Activated CD4-positive, alpha-beta memory T cell treated with anti-CD3 and anti-CD28 coated beads for 36 hours (primary cell): ENCODE measurements at regions of chr18 and their contacts with region 1.

Region 1: DNA sequence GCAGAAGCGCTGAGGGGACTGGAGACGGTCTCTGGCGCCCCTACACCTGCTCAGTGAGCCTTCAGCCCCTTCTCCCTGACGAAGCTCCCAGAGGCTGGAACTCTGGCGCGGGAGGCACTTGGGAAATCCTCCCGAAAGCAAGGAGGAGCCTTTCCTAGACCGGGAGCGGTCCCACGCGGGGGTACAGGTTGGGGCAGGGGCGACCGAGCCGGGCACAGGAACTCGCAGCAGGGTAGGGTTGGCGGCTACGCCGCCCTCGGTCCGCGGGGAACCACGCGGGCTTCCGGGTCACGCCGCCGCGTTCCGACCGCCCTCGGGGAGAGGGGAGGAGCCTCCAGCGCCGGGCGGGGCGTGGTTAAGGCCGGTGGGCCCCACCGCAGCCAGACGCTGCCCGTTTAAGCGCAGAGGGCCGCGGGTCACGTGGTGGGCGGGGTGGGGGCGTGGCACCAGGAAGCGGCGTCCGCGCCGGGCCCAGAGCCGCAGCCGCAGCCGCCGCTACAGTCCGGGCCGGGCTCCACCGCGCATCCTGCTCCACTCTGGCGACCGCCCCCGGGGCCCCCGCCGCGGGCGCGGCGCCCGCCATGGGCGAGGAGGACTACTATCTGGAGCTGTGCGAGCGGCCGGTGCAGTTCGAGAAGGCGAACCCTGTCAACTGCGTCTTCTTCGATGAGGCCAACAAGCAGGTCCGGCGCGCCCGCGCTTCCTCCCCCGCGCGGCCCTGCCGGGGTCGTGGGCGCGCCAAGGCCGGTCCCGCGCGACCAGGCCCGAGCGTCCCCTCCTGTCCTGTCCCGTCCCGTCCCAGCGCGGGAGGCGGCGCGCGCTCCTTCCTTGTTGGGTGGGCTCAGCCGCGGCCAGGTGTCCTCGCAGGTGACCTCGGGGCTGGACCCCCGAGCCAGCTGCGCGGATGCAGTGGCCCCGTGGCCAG is at the start of gene RMC1:
- DNase-seq: peak; percentile 98
- H3K4me3 Mint-ChIP-seq: peak within 1 kb of the TSS; percentile 91
- H3K27ac Mint-ChIP-seq: peak within 1 kb of the TSS; percentile 87
- H3K4me1 Mint-ChIP-seq: peaks cover 32% of the 10 kb centered on the region
- H3K27me3 Mint-ChIP-seq: no peaks in the 10 kb centered on the region
- total RNA-seq, gene RMC1: 47.6 to 48.6 TPM

Region 2: DNA sequence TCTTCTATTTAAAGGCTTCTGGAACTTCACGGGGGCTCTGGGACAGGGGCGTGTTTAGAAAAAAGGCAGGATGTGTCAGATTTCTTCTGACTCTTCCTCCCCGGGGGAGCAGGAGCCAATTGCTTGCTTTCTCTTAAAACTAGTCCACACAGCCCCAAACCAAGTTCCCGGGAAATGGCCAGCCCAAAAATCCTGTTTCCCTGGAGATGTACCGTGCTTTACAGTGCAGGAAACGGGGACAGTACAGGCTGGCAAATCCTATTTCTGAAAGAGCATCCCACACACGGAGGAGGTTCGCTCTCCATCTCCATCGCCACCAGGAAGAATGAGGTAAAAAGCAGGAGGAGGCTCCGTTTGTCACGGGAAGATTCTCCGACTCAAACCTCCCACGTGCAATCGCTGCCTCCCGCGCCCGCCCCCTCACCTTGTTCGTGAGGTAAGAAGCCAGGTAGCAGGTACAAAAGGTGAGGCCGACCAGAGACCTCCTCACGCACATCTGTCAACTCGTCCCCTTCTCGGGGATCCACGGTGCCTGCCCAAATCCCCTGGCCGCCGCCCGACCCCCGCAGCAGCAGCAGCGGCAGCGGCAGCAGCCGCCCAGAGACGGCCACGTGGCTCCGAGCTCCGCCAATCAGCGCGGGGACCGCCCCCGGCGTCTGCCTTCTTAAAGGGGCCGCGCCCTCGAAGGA is 65.8 kb before region 1 on chr18:
- CTCF ChIA-PET with region 1: interaction called, 3 read pairs
- POLR2A ChIA-PET with region 1: no interaction called
- intact Hi-C with region 1: loop called (anchors 1 kb)
- DNase-seq: peak; percentile 87
- H3K4me3 Mint-ChIP-seq: peak overlapping the region; percentile 90
- H3K27ac Mint-ChIP-seq: peak overlapping the region; percentile 18
- H3K4me1 Mint-ChIP-seq: peaks cover 17% of the 10 kb centered on the region
- H3K27me3 Mint-ChIP-seq: peaks cover 2% of the 10 kb centered on the region

Region 3: GRCh38 chr18:23487738-23488570 is 15.3 kb before region 1 on chr18:
- CTCF ChIA-PET with region 1: interaction called, 35 read pairs
- POLR2A ChIA-PET with region 1: no interaction called
- intact Hi-C with region 1: loop called (anchors 1 kb)
- DNase-seq: peak; percentile 71
- H3K4me3 Mint-ChIP-seq: peak overlapping the region; percentile 58
- H3K27ac Mint-ChIP-seq: peak overlapping the region; percentile 76
- H3K4me1 Mint-ChIP-seq: peaks cover 12% of the 10 kb centered on the region
- H3K27me3 Mint-ChIP-seq: no peaks in the 10 kb centered on the region

Region 4: GRCh38 chr18:23573626-23574431 is 70.5 kb after region 1 on chr18:
- CTCF ChIA-PET with region 1: no interaction called
- POLR2A ChIA-PET with region 1: no interaction called
- intact Hi-C with region 1: loop called (anchors 2 kb)
- DNase-seq: peak; percentile 73
- H3K4me3 Mint-ChIP-seq: peak overlapping the region; percentile 43
- H3K27ac Mint-ChIP-seq: peak overlapping the region; percentile 88
- H3K4me1 Mint-ChIP-seq: peaks cover 50% of the 10 kb centered on the region
- H3K27me3 Mint-ChIP-seq: no peaks in the 10 kb centered on the region

Region 5: GRCh38 chr18:23629444-23629946 is 126.2 kb after region 1 on chr18:
- CTCF ChIA-PET with region 1: no interaction called
- POLR2A ChIA-PET with region 1: no interaction called
- intact Hi-C with region 1: no loop called
- DNase-seq: no peak
- H3K4me3 Mint-ChIP-seq: no peak overlapping the region
- H3K27ac Mint-ChIP-seq: no peak overlapping the region
- H3K4me1 Mint-ChIP-seq: peaks cover 8% of the 10 kb centered on the region
- H3K27me3 Mint-ChIP-seq: peaks cover 3% of the 10 kb centered on the region

Region 6: GRCh38 chr18:23703057-23703986 is 200.0 kb after region 1 on chr18:
- CTCF ChIA-PET with region 1: interaction called, 8 read pairs
- POLR2A ChIA-PET with region 1: no interaction called
- intact Hi-C with region 1: loop called (anchors 2 kb)
- DNase-seq: peak; percentile 21
- H3K4me3 Mint-ChIP-seq: no peak overlapping the region
- H3K27ac Mint-ChIP-seq: no peak overlapping the region
- H3K4me1 Mint-ChIP-seq: no peaks in the 10 kb centered on the region
- H3K27me3 Mint-ChIP-seq: peaks cover 9% of the 10 kb centered on the region

Region 7: DNA sequence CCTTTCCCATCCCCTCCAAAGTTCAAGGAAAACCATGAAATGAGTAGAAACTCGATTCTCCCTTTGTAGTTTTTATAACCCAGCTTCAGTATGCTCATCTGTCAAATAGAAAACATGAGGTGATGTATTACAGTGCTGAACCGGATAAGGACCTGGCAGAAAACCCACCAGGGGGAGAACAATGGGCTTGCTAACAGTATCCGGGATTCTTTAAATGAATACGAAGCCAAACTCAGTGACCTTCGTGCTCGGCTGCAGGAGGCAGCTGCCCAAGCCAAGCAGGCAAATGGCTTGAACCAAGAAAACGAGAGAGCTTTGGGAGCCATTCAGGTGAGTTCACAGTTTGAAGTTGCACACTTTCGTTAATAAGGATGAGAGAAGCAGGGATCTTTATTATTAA is 397.7 kb after region 1 on chr18:
- CTCF ChIA-PET with region 1: no interaction called
- POLR2A ChIA-PET with region 1: no interaction called
- intact Hi-C with region 1: no loop called
- DNase-seq: no peak
- H3K4me3 Mint-ChIP-seq: no peak overlapping the region
- H3K27ac Mint-ChIP-seq: no peak overlapping the region
- H3K4me1 Mint-ChIP-seq: peaks cover 4% of the 10 kb centered on the region
- H3K27me3 Mint-ChIP-seq: peaks cover 2% of the 10 kb centered on the region

Region 8: DNA sequence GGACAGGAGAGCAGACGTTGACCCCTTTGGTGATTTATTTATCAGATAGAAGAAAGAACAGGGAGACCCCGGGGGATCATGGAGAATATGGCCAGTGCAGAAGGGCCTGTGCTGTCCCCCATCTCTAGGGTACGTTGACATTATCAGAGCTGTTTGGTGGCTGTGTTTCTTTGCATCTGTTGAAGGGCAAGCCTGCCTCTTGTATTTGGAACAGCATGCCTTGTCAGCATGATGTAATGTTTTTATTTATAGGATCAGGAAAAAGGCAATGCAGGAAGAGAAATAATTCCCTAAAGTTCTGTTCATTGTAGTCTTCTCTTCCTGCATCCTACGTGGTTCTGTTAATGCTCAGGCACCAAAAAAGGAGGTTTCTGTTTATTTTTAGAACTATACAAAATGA is 585.8 kb after region 1 on chr18:
- CTCF ChIA-PET with region 1: no interaction called
- POLR2A ChIA-PET with region 1: no interaction called
- intact Hi-C with region 1: no loop called
- DNase-seq: no peak
- H3K4me3 Mint-ChIP-seq: no peak overlapping the region
- H3K27ac Mint-ChIP-seq: no peak overlapping the region
- H3K4me1 Mint-ChIP-seq: peaks cover 34% of the 10 kb centered on the region
- H3K27me3 Mint-ChIP-seq: no peaks in the 10 kb centered on the region

Region 9: GRCh38 chr18:24118750-24119577 is 615.7 kb after region 1 on chr18:
- CTCF ChIA-PET with region 1: no interaction called
- POLR2A ChIA-PET with region 1: no interaction called
- intact Hi-C with region 1: loop called (anchors 10 kb)
- DNase-seq: peak; percentile 85
- H3K4me3 Mint-ChIP-seq: no peak overlapping the region
- H3K27ac Mint-ChIP-seq: peak overlapping the region; percentile 49
- H3K4me1 Mint-ChIP-seq: peaks cover 26% of the 10 kb centered on the region
- H3K27me3 Mint-ChIP-seq: no peaks in the 10 kb centered on the region

Region 10: GRCh38 chr18:24659827-24660720 is 1156.8 kb after region 1 on chr18:
- CTCF ChIA-PET with region 1: no interaction called
- POLR2A ChIA-PET with region 1: no interaction called
- intact Hi-C with region 1: no loop called
- DNase-seq: peak; percentile 44
- H3K4me3 Mint-ChIP-seq: peak overlapping the region; percentile 63
- H3K27ac Mint-ChIP-seq: no peak overlapping the region
- H3K4me1 Mint-ChIP-seq: peaks cover 12% of the 10 kb centered on the region
- H3K27me3 Mint-ChIP-seq: peaks cover 5% of the 10 kb centered on the region